CD8-positive, alpha-beta T cell (primary cell): ENCODE measurements at regions of chr13 and their contacts with region 1.

Region 1: GRCh38 chr13:99908140-99908803 is 63.3 kb downstream of the ZIC5 start:
- DNase-seq: no peak
- ATAC-seq: no peak
- H3K4me3 ChIP-seq: no peak overlapping the region
- H3K4me3 Mint-ChIP-seq: no peak overlapping the region
- H3K27ac ChIP-seq: no peak overlapping the region
- H3K27ac Mint-ChIP-seq: no peak overlapping the region
- H3K4me1 ChIP-seq: no peaks in the 10 kb centered on the region
- H3K4me1 Mint-ChIP-seq: peaks cover 6% of the 10 kb centered on the region
- H3K27me3 ChIP-seq: peaks cover 0 to 2% of the 10 kb centered on the region in 2 experiments
- H3K27me3 Mint-ChIP-seq: peaks cover 46% of the 10 kb centered on the region
- CTCF ChIP-seq: no peak

Region 2: DNA sequence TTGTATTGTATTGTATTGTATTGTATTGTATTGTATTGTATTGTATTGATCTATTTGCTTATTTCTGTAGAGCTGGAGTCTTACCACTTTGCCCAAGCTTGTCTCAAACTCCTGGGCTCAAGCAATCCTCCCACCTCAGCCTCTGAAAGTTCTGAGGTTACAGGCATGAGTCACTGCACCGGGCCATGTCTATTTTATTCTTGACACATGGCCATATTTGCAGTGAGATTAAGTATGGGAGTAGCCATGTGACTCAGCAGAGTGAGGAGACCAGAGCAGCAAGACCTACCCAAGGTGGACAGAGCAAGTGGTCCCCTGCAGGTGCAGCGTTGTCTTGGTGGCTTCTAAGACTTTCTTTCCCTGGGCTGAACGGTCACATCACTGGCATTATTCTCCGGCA is 756.8 kb before region 1 on chr13:
- CTCF ChIA-PET with region 1: no interaction called
- POLR2A ChIA-PET with region 1: no interaction called
- intact Hi-C with region 1: no loop called
- DNase-seq: no peak
- ATAC-seq: no peak
- H3K4me3 ChIP-seq: no peak overlapping the region
- H3K4me3 Mint-ChIP-seq: no peak overlapping the region
- H3K27ac ChIP-seq: no peak overlapping the region
- H3K27ac Mint-ChIP-seq: no peak overlapping the region
- H3K4me1 ChIP-seq: no peaks in the 10 kb centered on the region
- H3K4me1 Mint-ChIP-seq: no peaks in the 10 kb centered on the region
- H3K27me3 ChIP-seq: peaks cover 0 to 4% of the 10 kb centered on the region in 2 experiments
- H3K27me3 Mint-ChIP-seq: no peaks in the 10 kb centered on the region
- CTCF ChIP-seq: no peak

Region 3: DNA sequence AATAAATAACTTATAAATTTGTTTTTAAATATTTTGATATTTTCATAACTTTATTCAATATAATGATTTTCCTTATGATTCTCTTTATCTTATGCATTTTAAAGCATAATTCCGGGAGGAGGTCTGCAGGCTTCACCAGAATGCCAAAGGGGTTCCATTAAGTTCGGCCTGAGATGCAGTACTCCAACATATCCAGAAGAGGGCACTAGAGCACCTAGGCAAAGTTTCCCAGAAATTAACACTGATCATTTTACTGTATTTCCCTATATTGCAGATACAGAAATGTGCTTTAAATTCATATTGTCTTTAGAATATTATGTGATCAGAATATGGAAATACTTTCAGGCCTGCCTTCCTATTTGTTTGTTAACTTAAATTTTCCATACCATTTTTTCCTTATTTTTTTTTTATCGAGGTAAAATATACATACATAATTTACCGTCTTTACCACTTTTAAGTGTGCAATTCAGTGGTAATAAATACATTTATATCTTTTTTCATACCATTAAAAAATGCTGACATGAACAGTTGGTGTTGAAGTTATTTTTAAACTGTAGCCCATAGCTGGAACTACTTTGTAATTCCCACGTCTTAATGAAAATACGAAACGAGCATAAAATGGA is 465.9 kb before region 1 on chr13:
- CTCF ChIA-PET with region 1: no interaction called
- POLR2A ChIA-PET with region 1: no interaction called
- intact Hi-C with region 1: loop called in 1 of 2 experiments (anchors 10 kb)
- DNase-seq: peak in 7 of 9 experiments; percentile 40 to 78 (median 59)
- ATAC-seq: peak; percentile 92
- H3K4me3 ChIP-seq: no peak overlapping the region
- H3K4me3 Mint-ChIP-seq: no peak overlapping the region
- H3K27ac ChIP-seq: no peak overlapping the region
- H3K27ac Mint-ChIP-seq: no peak overlapping the region
- H3K4me1 ChIP-seq: peaks cover 4% of the 10 kb centered on the region
- H3K4me1 Mint-ChIP-seq: peaks cover 5% of the 10 kb centered on the region
- H3K27me3 ChIP-seq: no peaks in the 10 kb centered on the region
- H3K27me3 Mint-ChIP-seq: no peaks in the 10 kb centered on the region
- CTCF ChIP-seq: peak; percentile 99

Region 4: DNA sequence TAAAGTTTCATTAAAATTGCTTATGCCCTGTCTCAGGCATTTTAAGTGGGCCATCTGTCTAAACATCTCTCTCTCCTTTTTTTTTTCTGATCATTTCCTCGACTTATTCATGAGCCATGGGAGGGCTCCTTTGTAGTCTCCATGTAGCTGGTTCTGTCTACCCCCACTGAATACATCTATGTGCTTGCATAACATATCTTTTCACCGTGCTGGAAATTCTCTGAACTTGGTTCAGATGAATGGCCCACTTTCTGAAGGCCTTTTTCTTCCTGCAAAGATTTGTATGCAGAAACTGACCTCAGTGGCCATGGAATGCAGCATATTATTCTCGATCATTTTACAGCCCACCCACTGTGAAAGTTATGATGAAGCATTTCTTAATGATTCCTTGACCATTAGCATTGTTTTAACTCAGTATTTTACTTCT is 455.0 kb after region 1 on chr13:
- CTCF ChIA-PET with region 1: no interaction called
- POLR2A ChIA-PET with region 1: no interaction called
- intact Hi-C with region 1: no loop called
- DNase-seq: no peak
- ATAC-seq: no peak
- H3K4me3 ChIP-seq: no peak overlapping the region
- H3K4me3 Mint-ChIP-seq: no peak overlapping the region
- H3K27ac ChIP-seq: no peak overlapping the region
- H3K27ac Mint-ChIP-seq: no peak overlapping the region
- H3K4me1 ChIP-seq: no peaks in the 10 kb centered on the region
- H3K4me1 Mint-ChIP-seq: no peaks in the 10 kb centered on the region
- H3K27me3 ChIP-seq: no peaks in the 10 kb centered on the region
- H3K27me3 Mint-ChIP-seq: no peaks in the 10 kb centered on the region
- CTCF ChIP-seq: no peak